G401 (cell line): ENCODE measurements at regions of chr17 and their contacts with region 1.

Region 1: GRCh38 chr17:49880291-49881053 is 32.6 kb upstream of the TAC4 start:
- DNase-seq: peak; percentile 61

Region 2: GRCh38 chr17:49935526-49936210 is 55.2 kb after region 1 on chr17:
- in situ Hi-C with region 1: no loop called
- DNase-seq: no peak

Region 3: DNA sequence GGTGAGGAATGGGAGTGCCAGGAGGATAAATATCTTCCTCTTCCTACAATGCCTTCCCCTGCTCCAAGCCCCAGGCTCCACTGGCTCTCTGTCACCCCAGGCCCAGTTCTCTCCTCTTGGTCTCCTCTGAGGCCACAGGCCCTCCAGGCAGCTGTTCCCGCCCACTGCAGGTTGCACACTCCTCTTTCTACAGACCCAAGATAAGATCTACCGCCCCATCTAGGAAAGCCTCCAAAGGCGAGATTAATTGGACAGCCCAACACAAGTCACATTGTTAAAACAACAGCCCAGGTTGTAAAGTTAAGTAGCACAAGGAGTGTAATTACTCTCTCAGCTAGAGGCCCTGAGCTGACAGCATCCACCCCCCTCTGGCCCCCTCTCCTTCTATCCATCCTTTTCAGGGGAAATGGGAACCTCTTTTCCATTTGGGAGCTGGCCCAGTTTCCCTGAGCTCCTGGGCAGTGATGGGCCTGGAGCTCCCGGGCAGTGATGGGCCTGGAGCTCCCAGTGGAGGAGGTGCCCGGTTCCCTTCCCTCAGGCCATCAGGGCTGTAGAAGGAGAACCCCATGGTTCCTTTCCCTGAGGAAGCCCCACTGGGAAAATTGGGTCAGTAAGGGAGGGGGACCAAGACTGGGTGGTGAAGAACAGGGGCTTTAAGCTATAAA is 95.8 kb after region 1 on chr17:
- in situ Hi-C with region 1: loop called (anchors 5 kb)
- DNase-seq: peak; percentile 65